SK-N-SH (cell line): ENCODE measurements at regions of chr3 and their contacts with region 1.

Region 1: DNA sequence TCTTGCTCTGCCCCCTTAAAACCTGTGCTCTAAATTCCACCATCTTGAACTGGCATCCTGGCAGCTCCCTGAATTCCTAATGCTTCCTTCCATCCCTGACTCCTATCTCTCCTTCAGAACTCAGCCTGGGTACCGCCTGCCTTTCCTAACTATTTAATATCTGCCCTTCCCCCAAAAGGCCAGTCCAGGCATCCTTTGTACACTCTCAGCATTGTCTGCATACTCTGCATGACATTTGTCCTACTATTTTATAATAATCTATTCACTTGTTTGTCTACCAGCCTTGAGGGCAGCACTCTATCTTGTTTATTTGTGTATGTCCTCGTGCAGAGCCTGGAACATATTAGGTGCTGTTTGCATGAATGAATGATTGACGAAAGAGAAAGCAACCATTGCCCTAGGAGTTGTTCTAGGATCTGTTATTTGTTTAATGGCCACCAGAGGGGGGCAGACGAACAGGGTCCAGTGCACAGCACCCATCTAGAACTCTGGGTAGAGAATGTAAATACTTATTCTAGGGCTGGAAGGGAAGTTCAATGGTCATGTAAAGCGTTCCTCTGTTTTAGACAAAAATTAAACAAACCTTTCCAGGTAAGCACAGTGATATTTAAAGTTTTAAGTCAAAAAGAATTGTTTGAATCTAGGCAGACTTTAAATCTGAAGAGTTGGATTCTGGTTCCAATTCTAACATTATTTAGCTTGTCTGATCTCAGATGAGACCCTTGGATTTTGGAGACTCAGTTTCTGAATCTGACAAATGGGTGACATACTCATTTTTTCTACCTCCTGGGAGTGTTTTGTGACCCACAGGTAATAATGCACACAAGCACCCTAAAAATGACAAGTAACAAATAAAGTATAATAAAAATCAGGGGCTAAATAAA is 125.8 kb upstream of the GALNT15 start:
- DNase-seq: peak; percentile 83
- H3K4me3 ChIP-seq: peak overlapping the region; percentile 23 to 26; a peak in 2 of 4 replicates
- H3K27ac ChIP-seq: no peak overlapping the region
- H3K4me1 ChIP-seq: no peaks in the 10 kb centered on the region; a peak in 2 of 4 replicates
- H3K27me3 ChIP-seq: no peaks in the 10 kb centered on the region
- CTCF ChIP-seq: peak; percentile 87
- EP300 ChIP-seq: no peak
- RAD21 ChIP-seq: peak; percentile 97

Region 2: DNA sequence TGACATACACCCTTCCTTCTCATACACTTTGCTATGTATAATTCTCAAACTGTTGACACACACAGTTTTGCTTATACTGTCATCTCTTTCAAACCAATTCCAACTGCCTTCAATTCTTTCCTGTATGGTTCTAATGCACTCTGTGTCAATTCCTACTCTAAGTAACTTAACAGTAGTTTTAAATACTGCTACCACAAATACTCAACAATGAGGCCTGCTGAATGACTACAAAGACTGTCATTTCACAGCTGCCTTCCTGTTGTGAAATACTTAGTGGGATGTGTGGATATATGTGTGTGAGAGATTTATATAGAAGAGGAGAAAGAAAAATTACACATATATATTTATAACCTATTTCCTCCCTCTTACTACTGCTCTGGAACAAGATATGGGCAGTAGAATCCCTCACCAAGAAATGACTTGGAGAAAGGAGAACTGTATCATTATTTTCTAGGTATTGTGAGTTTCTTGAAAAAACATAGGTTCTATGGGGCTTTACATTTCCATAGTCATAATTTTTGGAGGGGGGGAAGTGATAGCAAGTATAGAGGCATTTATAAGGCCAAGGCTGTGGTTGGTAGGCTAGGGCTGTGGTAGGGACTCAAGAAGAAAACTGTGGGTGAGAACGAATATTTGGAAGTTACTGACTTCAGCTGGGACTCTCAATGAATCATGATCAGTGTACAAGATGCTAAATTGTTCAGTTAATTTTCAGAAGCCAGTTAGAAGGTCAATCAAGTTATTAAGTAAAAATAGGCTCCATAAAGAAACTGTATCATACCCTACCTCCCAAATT is 339.6 kb before region 1 on chr3:
- CTCF ChIA-PET with region 1: no interaction called
- POLR2A ChIA-PET with region 1: no interaction called
- DNase-seq: no peak
- H3K4me3 ChIP-seq: no peak overlapping the region
- H3K27ac ChIP-seq: no peak overlapping the region
- H3K4me1 ChIP-seq: no peaks in the 10 kb centered on the region; a peak in 2 of 4 replicates
- H3K27me3 ChIP-seq: no peaks in the 10 kb centered on the region
- CTCF ChIP-seq: no peak
- EP300 ChIP-seq: no peak
- RAD21 ChIP-seq: no peak

Region 3: GRCh38 chr3:16060358-16060852 is 11.7 kb after region 1 on chr3:
- CTCF ChIA-PET with region 1: interaction called, 37 read pairs
- POLR2A ChIA-PET with region 1: no interaction called
- DNase-seq: no peak
- H3K4me3 ChIP-seq: no peak overlapping the region
- H3K27ac ChIP-seq: peak overlapping the region; percentile 1 to 99; a peak in 3 of 4 replicates
- H3K4me1 ChIP-seq: peaks cover 3 to 32% of the 10 kb centered on the region in 2 experiments
- H3K27me3 ChIP-seq: no peaks in the 10 kb centered on the region
- CTCF ChIP-seq: peak; percentile 49
- EP300 ChIP-seq: peak in 1 of 2 experiments; percentile 92; a peak in 2 of 4 replicates
- RAD21 ChIP-seq: peak; percentile 31; the same call in 1 of the 2 replicates

Region 4: GRCh38 chr3:16247276-16248061 is 198.8 kb after region 1 on chr3:
- CTCF ChIA-PET with region 1: interaction called, 30 read pairs
- POLR2A ChIA-PET with region 1: no interaction called
- DNase-seq: peak; percentile 76
- H3K4me3 ChIP-seq: no peak overlapping the region; a peak in 1 of 4 replicates
- H3K27ac ChIP-seq: no peak overlapping the region
- H3K4me1 ChIP-seq: peaks cover 0 to 11% of the 10 kb centered on the region in 2 experiments; a peak in 1 of 4 replicates
- H3K27me3 ChIP-seq: no peaks in the 10 kb centered on the region
- CTCF ChIP-seq: peak; percentile 91
- EP300 ChIP-seq: no peak
- RAD21 ChIP-seq: peak; percentile 95